Spleen (tissue), 13 donors: ENCODE measurements at regions of chr1 and their contacts with region 1.

Region 1: GRCh38 chr1:6026095-6026809 is 19.4 kb upstream of the KCNAB2 start:
- DNase-seq: peak; percentile 100
- H3K4me3 ChIP-seq: peak overlapping the region; percentile 29 to 87 (median 54)
- H3K27ac ChIP-seq: peak overlapping the region; percentile 54 to 92 (median 88)
- H3K4me1 ChIP-seq: peaks cover 21 to 71% (median 56%) of the 10 kb centered on the region in 6 donors
- H3K27me3 ChIP-seq: peaks cover 0 to 17% (median 0%) of the 10 kb centered on the region in 7 donors
- CTCF ChIP-seq: peak in 4 of 11 experiments; percentile 11 to 44 (median 26)
- POLR2A ChIP-seq: peak in 1 of 3 donors; percentile 63

Region 2: GRCh38 chr1:5992026-5992813 is 34.0 kb before region 1 on chr1 and contains the start of gene NPHP4:
- intact Hi-C with region 1: loop called (anchors 5 kb)
- DNase-seq: peak; percentile 99
- H3K4me3 ChIP-seq: peak within 1 kb of the TSS; percentile 64 to 98 (median 94)
- H3K27ac ChIP-seq: peak within 1 kb of the TSS; percentile 89 to 98 (median 92)
- H3K4me1 ChIP-seq: peaks cover 19 to 59% (median 41%) of the 10 kb centered on the region in 6 donors
- H3K27me3 ChIP-seq: no peaks in the 10 kb centered on the region
- CTCF ChIP-seq: peak in 3 of 11 experiments; percentile 20 to 38 (median 37)
- POLR2A ChIP-seq: peak in 1 of 3 donors; percentile 46
- total RNA-seq, gene NPHP4: 8.4 to 17.5 (median 10.9) TPM